Activated B cell treated with CpG ODN at 0.5 μM for 24 hours (primary cell): ENCODE measurements at regions of chr4 and their contacts with region 1.

Region 1: DNA sequence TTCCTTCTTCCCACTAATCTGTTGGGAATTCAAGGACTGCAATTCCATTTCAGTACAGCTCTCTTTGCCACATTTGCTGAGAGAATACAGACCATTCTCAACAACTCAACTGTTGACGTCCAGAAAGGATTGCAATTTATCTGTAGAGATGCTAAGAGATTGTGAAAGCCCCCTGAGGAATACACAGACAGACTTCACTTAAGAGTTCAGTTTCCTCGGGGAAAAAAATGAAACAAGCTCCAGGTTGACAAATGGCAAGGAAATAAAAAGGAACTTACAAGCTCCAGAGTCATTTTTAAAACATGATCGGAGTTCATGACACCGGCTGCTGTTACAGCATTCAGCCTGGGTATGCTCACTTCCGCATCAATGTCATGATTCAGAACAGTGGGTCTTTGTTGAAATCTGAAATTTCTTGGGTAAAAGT is 13.8 kb downstream of the TLR10 start:
- DNase-seq: no peak
- ATAC-seq: peak; percentile 66
- H3K4me3 Mint-ChIP-seq: peak overlapping the region; percentile 30
- H3K27ac Mint-ChIP-seq: peak overlapping the region; percentile 79
- H3K4me1 Mint-ChIP-seq: peaks cover 80% of the 10 kb centered on the region
- H3K27me3 Mint-ChIP-seq: no peaks in the 10 kb centered on the region
- CTCF ChIP-seq: no peak

Region 2: DNA sequence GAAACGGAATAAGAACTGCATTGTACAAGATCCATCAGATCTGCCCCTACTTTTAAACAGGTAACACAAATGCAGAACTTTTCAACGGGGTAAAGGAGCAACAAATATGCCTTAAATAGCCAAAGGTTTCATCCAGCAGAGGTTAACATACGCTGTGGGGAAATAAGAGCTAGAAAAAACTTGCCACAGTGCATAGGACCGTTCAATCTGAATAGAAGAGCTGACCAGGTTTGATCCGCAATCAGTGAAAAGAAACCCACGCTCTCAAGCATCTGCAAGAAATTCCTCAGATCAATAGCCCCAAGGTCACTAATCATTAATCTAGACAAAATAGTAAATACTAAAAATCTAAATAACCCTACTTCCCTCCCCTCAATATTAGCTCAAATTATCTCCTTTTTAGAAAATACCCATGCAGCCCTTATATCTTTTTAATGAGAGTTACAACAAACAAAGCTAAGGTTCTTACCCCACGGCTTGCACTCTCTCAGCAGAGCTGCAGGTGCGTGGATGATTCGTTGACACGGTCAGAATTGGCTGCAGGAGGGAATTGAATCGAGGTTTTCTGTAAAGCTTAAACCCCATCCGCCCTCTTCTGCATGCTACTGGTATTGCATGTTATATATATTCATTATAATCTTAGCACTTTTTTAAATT is 13.6 kb after region 1 on chr4 and contains the start of gene TLR10:
- CTCF ChIA-PET with region 1: interaction called, 331 read pairs
- POLR2A ChIA-PET with region 1: interaction called, 81 read pairs
- intact Hi-C with region 1: loop called (anchors 1 kb)
- DNase-seq: no peak
- ATAC-seq: peak; percentile 80
- H3K4me3 Mint-ChIP-seq: peak within 1 kb of the TSS; percentile 100
- H3K27ac Mint-ChIP-seq: peak within 1 kb of the TSS; percentile 98
- H3K4me1 Mint-ChIP-seq: peaks cover 64% of the 10 kb centered on the region
- H3K27me3 Mint-ChIP-seq: no peaks in the 10 kb centered on the region
- CTCF ChIP-seq: no peak
- total RNA-seq, gene TLR10: 92.0 and 107 TPM in 2 replicates